ENCODE measurements at regions of chr4 and their contacts with region 1.

Region 1: GRCh38 chr4:38759113-38759789 is 23.5 kb downstream of the TLR10 start:
- DNase-seq: no peak
- H3K4me3 ChIP-seq: no peak overlapping the region
- H3K4me3 Mint-ChIP-seq: no peak overlapping the region
- H3K27ac Mint-ChIP-seq: no peak overlapping the region
- H3K4me1 ChIP-seq: no peaks in the 10 kb centered on the region
- H3K4me1 Mint-ChIP-seq: no peaks in the 10 kb centered on the region
- H3K27me3 ChIP-seq: no peaks in the 10 kb centered on the region
- H3K27me3 Mint-ChIP-seq: no peaks in the 10 kb centered on the region
- CTCF ChIP-seq: peak in 1 of 2 experiments; percentile 18

Region 2: GRCh38 chr4:38782452-38783108 is 23.3 kb after region 1 on chr4 and contains the start of gene TLR10:
- CTCF ChIA-PET with region 1: interaction called, 42 read pairs
- POLR2A ChIA-PET with region 1: no interaction called
- intact Hi-C with region 1: loop called (anchors 1 kb)
- DNase-seq: peak in 1 of 2 experiments; percentile 59
- H3K4me3 ChIP-seq: no peak within 1 kb of the TSS
- H3K4me3 Mint-ChIP-seq: no peak within 1 kb of the TSS
- H3K27ac Mint-ChIP-seq: no peak within 1 kb of the TSS
- H3K4me1 ChIP-seq: peaks cover 7% of the 10 kb centered on the region
- H3K4me1 Mint-ChIP-seq: peaks cover under 1% of the 10 kb centered on the region
- H3K27me3 ChIP-seq: no peaks in the 10 kb centered on the region
- H3K27me3 Mint-ChIP-seq: peaks cover 2% of the 10 kb centered on the region
- CTCF ChIP-seq: peak; percentile 50 to 59
- total RNA-seq, gene TLR10: not detected in 2 replicates

Region 3: GRCh38 chr4:38804654-38805295 is 45.5 kb after region 1 on chr4 and contains the start of gene TLR1:
- CTCF ChIA-PET with region 1: interaction called, 9 read pairs
- POLR2A ChIA-PET with region 1: no interaction called
- intact Hi-C with region 1: loop called (anchors 5 kb)
- DNase-seq: no peak
- H3K4me3 ChIP-seq: no peak within 1 kb of the TSS
- H3K4me3 Mint-ChIP-seq: no peak within 1 kb of the TSS
- H3K27ac Mint-ChIP-seq: no peak within 1 kb of the TSS
- H3K4me1 ChIP-seq: no peaks in the 10 kb centered on the region
- H3K4me1 Mint-ChIP-seq: no peaks in the 10 kb centered on the region
- H3K27me3 ChIP-seq: no peaks in the 10 kb centered on the region
- H3K27me3 Mint-ChIP-seq: no peaks in the 10 kb centered on the region
- CTCF ChIP-seq: peak in 1 of 2 experiments; percentile 37
- total RNA-seq, gene TLR1: not detected in 2 replicates

Region 4: DNA sequence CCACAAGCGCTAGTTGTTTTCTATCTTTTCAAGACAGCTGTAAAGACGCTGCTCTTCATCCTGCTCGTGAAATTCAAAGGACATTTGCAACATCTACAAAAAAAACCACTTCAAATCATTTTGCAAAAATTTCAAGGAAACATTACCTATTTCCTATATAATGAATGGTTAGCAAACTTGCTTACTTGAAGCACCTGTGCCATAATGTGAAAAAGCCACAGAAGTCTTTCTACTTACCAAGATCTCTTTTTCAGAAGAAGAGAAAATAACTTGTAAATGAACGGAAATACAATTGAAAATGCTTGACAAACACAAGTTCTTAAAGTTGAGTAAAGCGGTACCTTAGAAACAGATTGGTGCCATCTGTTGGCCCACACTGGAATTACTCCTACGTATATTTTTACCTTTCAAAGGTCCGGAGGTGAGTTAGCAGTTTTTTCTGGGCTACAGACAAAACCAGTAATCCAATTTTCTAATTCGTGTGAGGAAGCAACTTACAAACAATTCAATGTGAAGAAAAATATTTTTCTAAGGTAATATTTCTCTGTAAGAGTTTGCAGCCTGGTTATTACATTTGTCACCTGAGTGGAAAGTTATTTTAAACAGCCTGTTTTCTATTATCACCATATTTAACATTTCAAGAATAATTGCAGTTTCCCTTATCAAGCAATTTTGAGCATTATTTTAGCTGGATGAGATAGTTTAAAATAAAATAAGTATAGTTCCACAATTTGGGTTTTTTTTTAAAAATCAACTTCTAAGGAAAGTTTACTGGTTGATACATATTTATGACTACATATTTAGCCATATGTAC is 97.5 kb after region 1 on chr4 and contains the start of gene TLR6:
- CTCF ChIA-PET with region 1: interaction called, 9 read pairs
- POLR2A ChIA-PET with region 1: no interaction called
- intact Hi-C with region 1: loop called (anchors 1 kb)
- DNase-seq: peak; percentile 47 to 69
- H3K4me3 ChIP-seq: no peak within 1 kb of the TSS
- H3K4me3 Mint-ChIP-seq: peak within 1 kb of the TSS; percentile 54
- H3K27ac Mint-ChIP-seq: no peak within 1 kb of the TSS
- H3K4me1 ChIP-seq: no peaks in the 10 kb centered on the region
- H3K4me1 Mint-ChIP-seq: peaks cover 7% of the 10 kb centered on the region
- H3K27me3 ChIP-seq: no peaks in the 10 kb centered on the region; the same call in 1 of the 2 replicates
- H3K27me3 Mint-ChIP-seq: no peaks in the 10 kb centered on the region
- CTCF ChIP-seq: peak; percentile 71
- total RNA-seq, gene TLR6: not detected in 2 replicates